Colonic mucosa (tissue), 4 donors: ENCODE measurements at regions of chr17 and their contacts with region 1.

Region 1: GRCh38 chr17:82767041-82767754 is 15.3 kb downstream of the TBCD start:
- DNase-seq: peak; percentile 85
- H3K4me3 ChIP-seq: no peak overlapping the region
- H3K27ac ChIP-seq: no peak overlapping the region
- H3K4me1 ChIP-seq: no peaks in the 10 kb centered on the region
- H3K27me3 ChIP-seq: no peaks in the 10 kb centered on the region
- CTCF ChIP-seq: peak; percentile 56

Region 2: DNA sequence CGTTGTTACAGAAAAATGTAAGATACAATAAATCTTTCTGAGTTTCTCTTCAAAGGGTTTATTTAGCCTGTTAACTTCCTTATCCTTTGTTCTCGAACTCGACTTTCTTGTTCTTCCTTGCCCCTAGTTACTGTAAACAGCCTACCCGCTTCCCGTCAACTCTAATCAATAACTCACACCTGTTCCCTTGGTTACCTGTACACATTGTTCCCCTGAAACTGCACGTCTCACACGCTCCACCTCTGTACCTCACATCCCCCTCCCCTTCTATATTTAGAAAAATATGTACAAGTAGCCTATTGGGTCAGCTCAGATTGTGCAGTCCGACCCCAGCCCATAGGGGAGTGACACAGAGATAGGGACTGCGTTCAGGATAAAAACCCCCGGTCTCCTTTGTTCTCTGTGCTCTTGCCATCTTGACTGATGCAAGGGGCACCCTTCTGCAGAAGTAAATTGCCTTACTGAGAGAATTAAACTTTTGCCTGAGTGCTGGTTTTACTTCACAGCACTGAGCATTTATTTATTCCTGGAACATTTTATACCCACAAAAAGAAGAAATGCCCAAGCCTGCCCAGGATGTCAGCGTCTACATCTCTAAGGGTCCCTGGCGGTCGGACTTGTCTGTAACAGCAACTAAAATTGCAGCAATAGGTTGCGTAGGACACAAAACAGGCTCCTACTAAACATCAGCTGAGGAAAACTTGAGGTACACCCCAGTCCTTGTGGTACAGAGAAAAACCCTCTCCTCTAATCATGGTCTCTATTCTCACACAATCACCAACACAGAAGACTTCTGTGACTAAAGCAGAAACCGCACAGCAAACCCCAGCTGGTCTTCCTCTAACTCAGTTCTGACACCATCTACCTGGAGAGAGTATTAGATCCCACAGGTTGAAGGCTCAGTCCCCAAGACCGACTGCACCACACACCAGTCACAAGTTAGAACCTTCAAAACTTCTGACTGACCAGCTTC is 130.3 kb before region 1 on chr17:
- intact Hi-C with region 1: no loop called
- DNase-seq: peak; percentile 63
- H3K4me3 ChIP-seq: no peak overlapping the region
- H3K27ac ChIP-seq: peak overlapping the region; percentile 66
- H3K4me1 ChIP-seq: no peaks in the 10 kb centered on the region
- H3K27me3 ChIP-seq: no peaks in the 10 kb centered on the region
- CTCF ChIP-seq: no peak

Region 3: DNA sequence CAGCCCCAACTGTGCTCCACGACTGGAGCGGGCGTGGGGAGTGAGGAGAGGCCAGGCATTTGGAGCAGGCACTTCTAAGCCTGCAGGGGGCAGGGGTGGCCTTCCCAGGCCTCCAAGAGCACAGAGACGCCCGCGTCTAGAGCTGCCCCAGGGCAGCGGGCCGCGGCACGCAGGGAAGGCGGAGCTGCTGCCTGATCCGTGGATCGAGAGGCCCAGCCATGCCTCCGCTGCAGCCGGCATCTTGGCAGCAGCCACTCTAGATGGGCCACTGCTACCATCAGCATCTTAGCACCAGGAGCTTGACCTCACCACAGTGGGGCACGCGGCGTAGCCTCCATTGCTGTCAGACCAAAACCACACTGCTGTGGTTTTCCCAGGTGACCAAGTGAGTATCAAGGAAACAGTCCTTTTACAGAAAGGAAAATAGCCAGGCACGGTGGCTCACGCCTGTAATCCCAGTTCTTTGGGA is 98.5 kb before region 1 on chr17:
- intact Hi-C with region 1: loop called (anchors 5 kb)
- DNase-seq: peak; percentile 67
- H3K4me3 ChIP-seq: no peak overlapping the region
- H3K27ac ChIP-seq: no peak overlapping the region
- H3K4me1 ChIP-seq: no peaks in the 10 kb centered on the region
- H3K27me3 ChIP-seq: no peaks in the 10 kb centered on the region
- CTCF ChIP-seq: peak; percentile 45

Region 4: DNA sequence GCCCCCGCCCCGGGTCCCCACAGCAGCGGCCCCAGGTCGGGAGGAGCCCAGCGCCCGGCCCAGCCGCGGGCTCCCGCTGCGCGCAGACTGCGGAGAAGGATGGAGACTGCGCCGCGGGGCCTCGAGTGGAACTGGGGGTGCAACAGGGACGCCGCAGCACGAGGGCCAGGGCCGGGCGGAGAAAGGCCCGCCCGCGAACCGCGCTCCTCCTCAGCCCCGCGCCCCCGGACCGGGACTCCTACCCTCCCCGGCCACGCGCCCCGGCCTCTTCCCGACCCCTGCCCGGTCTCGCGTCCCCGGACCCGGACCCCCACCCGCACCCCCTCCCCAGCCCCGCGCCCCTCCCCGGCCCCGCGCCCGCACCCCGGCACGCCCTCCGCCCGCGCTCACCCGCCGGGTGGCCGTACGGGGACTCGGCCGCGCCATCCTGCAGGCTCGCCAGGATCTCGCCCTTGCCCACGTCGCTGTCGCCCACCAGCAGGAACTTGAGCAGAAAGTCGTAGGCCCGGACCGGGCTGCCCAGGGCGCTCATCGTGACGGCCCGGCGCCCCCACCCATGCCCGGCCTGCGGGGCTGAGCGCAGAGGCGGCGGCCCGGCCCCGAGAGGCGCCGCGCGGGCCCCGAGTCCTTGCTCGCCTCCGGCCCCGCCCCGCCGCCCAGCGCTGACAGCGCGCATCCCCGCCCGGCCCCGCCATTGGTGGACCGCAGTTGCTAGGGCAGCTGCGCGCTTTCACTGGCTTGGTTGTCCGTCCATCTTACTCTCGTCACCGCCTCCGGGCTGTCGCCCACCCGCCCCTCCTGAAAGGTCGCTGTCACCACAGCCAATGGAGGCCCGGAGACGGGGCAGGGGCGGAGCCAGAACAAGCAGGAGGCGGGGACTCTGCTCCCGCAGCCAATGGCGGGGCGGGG is 68.9 kb before region 1 on chr17 and contains the start of gene RAB40B:
- intact Hi-C with region 1: no loop called
- DNase-seq: peak; percentile 99
- H3K4me3 ChIP-seq: peak within 1 kb of the TSS; percentile 80
- H3K27ac ChIP-seq: no peak within 1 kb of the TSS
- H3K4me1 ChIP-seq: peaks cover 12% of the 10 kb centered on the region
- H3K27me3 ChIP-seq: no peaks in the 10 kb centered on the region
- CTCF ChIP-seq: no peak
- total RNA-seq, gene RAB40B: 34.7 to 35.8 TPM